ENCODE measurements at regions of chr14 and their contacts with region 1.

Region 1: GRCh38 chr14:22579236-22579635 is 9.8 kb downstream of the DAD1 start:
- DNase-seq: no peak
- ATAC-seq: no peak
- H3K4me3 ChIP-seq: no peak overlapping the region
- H3K27ac ChIP-seq: no peak overlapping the region
- H3K4me1 ChIP-seq: peaks cover 17% of the 10 kb centered on the region
- H3K27me3 ChIP-seq: no peaks in the 10 kb centered on the region
- CTCF ChIP-seq: no peak
- EP300 ChIP-seq: no peak
- POLR2A ChIP-seq: no peak
- RAD21 ChIP-seq: no peak

Region 2: GRCh38 chr14:22598099-22598899 is 19.1 kb after region 1 on chr14 and contains the start of gene ABHD4:
- CTCF ChIA-PET with region 1: interaction called, 58 read pairs
- POLR2A ChIA-PET with region 1: interaction called, 91 read pairs
- RAD21 ChIA-PET with region 1: interaction called, 11 read pairs
- SMC1A ChIA-PET with region 1: interaction called, 72 read pairs
- in situ Hi-C with region 1: no loop called
- intact Hi-C with region 1: no loop called
- DNase-seq: no peak
- ATAC-seq: peak; percentile 97
- H3K4me3 ChIP-seq: peak within 1 kb of the TSS; percentile 94
- H3K27ac ChIP-seq: peak within 1 kb of the TSS; percentile 45
- H3K4me1 ChIP-seq: peaks cover 19% of the 10 kb centered on the region
- H3K27me3 ChIP-seq: no peaks in the 10 kb centered on the region
- CTCF ChIP-seq: no peak
- EP300 ChIP-seq: no peak
- POLR2A ChIP-seq: peak; percentile 62; the same call in 1 of the 2 replicates
- RAD21 ChIP-seq: no peak
- polyA plus RNA-seq, gene ABHD4: 7.7 to 7.9 TPM

Region 3: GRCh38 chr14:22786685-22787084 is 207.4 kb after region 1 on chr14:
- CTCF ChIA-PET with region 1: no interaction called
- POLR2A ChIA-PET with region 1: no interaction called
- RAD21 ChIA-PET with region 1: no interaction called
- SMC1A ChIA-PET with region 1: no interaction called
- in situ Hi-C with region 1: no loop called
- intact Hi-C with region 1: no loop called
- DNase-seq: no peak
- ATAC-seq: no peak
- H3K4me3 ChIP-seq: no peak overlapping the region
- H3K27ac ChIP-seq: no peak overlapping the region
- H3K4me1 ChIP-seq: peaks cover 21% of the 10 kb centered on the region
- H3K27me3 ChIP-seq: no peaks in the 10 kb centered on the region
- CTCF ChIP-seq: no peak
- EP300 ChIP-seq: no peak
- POLR2A ChIP-seq: no peak
- RAD21 ChIP-seq: no peak

Measured in GM12878 (cell line).